GM13976 (cell line): ENCODE measurements at regions of chr10 and their contacts with region 1.

Region 1: GRCh38 chr10:71209352-71209715 is 3.0 kb upstream of the UNC5B start:
- DNase-seq: no peak
- CTCF ChIP-seq: no peak

Region 2: DNA sequence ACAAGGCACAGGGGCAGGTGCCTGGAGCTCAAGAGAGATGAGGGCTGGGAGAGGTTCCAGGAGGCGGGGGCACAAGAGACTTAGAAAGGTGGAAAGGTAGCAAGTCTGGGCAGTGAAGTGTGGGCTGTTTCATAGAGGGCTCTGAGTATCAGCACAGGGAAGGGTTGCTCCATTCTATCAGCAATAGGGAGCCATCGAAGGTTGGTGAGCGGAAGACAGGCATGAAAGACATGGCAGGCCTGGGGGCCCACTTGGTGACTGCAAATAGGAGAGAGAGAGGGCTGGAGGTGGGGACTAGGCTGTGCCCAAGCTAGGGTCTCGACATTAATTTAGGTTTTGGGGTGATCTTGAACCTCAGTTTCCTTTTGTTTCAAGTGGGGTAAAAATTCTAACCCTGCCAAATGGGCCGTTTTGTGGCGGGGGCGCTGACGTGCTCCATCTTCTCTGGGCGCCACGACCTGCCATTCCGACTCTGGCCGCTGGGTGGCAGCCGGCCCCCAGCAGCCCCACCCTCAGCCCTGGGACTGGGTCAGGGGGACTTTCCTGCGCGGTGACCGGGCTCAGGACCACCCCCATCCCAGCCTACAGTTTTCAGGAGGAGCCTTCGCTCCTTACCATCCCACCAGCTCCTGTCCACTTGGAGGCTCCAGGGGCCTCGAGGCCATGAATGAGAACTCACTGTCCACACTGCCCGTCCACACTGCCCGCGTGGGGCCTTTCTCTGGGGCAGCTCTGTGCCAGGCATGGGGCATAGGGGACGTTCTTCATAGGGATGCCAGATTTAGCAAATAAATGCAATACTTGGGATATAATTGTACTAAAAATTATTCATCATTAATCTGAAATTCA is 283.7 kb before region 1 on chr10:
- in situ Hi-C with region 1: loop called (anchors 10 kb)
- DNase-seq: peak; percentile 86
- CTCF ChIP-seq: peak; percentile 82

Region 3: DNA sequence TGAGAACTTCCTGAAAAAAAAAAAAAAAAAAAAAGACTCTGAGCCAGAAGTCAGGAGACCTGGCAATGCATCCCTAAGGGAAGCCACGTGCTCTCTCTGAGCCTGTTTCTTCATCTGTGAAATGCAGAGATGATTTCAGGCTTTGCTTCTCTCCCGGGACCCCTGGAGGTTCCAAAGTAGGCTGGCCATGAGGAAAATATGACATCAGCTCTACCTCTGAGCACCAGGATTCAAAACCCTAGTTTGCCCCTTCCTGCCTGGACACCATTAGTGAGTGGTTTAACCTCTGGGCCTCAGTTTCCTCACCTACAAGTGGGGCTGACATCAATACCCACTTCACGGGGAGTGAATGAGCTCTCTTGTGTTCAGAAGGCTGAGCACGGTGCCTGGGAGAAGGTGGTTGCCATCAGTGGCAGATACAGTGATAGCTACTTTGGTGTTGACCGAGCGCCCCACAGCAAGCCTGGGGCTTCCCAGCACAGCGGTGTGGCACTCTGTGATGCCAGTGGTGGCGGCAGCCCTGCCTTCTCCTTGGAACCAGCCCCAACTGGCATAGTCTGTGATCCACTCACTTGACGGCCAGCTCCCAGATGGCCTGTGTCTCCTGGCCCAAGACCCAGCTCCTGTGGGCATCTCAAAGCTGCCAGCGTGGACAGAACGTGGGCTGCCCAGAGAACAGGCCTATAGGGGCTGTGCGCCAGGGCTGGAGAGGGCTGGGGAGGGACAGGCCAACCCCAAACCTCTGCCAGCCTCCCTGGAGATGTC is 150.1 kb before region 1 on chr10:
- in situ Hi-C with region 1: no loop called
- DNase-seq: no peak
- CTCF ChIP-seq: no peak